Calu3 (cell line): ENCODE measurements at regions of chr4 and their contacts with region 1.

Region 1: DNA sequence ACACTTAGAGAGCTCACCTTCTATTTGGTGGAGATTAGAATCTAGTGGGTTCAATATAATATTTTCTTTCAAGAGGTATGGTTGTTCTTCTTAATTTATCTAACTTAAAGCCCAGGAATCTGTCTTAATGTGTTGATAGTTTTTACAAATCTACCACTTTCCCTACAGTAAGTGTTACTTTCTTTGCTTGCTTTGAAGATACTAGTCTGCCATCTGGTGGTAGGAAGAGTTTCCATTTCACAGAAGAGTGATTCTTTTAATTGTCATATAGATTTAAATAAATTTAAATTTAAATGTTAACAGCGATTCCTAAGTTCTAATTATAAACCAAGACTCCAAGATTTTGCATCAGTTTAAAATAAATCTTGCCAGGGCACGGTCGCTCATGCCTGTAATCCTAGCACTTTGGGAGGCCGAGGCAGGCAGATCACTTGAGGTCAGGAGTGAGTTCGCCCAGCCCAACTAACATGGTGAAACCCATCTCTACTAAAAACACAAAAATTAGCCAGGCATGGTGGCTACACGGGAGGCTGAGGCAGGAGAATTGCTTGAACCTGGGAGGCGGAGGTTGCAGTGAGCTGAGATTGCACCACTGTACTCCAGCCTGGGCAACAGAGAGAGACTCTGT is 43.5 kb downstream of the NUDT9 start:
- DNase-seq: peak; percentile 7
- H3K4me3 Mint-ChIP-seq: no peak overlapping the region
- H3K27ac Mint-ChIP-seq: no peak overlapping the region
- H3K4me1 Mint-ChIP-seq: no peaks in the 10 kb centered on the region
- H3K27me3 Mint-ChIP-seq: no peaks in the 10 kb centered on the region
- CTCF ChIP-seq: no peak

Region 2: GRCh38 chr4:87150498-87151261 is 315.2 kb before region 1 on chr4:
- CTCF ChIA-PET with region 1: no interaction called
- intact Hi-C with region 1: loop called (anchors 10 kb)
- DNase-seq: peak; percentile 48
- H3K4me3 Mint-ChIP-seq: no peak overlapping the region
- H3K27ac Mint-ChIP-seq: no peak overlapping the region
- H3K4me1 Mint-ChIP-seq: no peaks in the 10 kb centered on the region
- H3K27me3 Mint-ChIP-seq: no peaks in the 10 kb centered on the region
- CTCF ChIP-seq: peak; percentile 35

Region 3: DNA sequence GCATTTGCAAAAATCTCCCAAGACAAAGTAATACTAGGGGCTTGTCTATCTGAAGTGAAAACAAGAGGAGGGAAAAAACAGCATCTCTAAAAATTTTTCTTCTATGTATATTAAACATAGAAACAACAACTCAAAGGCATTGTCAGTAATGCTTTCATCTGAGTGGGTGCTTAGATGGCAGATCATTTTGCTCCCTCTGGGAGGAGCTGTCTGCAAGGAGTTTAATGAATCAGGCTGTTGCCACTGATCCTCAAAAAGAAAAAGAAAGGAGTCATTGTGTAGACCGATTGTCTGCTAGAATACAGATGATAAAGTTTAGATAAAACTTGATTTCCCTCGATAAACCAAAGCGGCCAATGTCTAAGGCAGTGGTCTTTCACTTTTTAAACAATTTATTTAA is 195.7 kb before region 1 on chr4:
- CTCF ChIA-PET with region 1: no interaction called
- intact Hi-C with region 1: loop called (anchors 1 kb)
- DNase-seq: peak; percentile 20
- H3K4me3 Mint-ChIP-seq: no peak overlapping the region
- H3K27ac Mint-ChIP-seq: no peak overlapping the region
- H3K4me1 Mint-ChIP-seq: no peaks in the 10 kb centered on the region
- H3K27me3 Mint-ChIP-seq: no peaks in the 10 kb centered on the region
- CTCF ChIP-seq: no peak

Region 4: GRCh38 chr4:87375719-87376291 is 90.0 kb before region 1 on chr4:
- CTCF ChIA-PET with region 1: no interaction called
- intact Hi-C with region 1: loop called (anchors 2 kb)
- DNase-seq: no peak
- H3K4me3 Mint-ChIP-seq: no peak overlapping the region
- H3K27ac Mint-ChIP-seq: no peak overlapping the region
- H3K4me1 Mint-ChIP-seq: no peaks in the 10 kb centered on the region
- H3K27me3 Mint-ChIP-seq: no peaks in the 10 kb centered on the region
- CTCF ChIP-seq: peak; percentile 47